A549 (cell line): ENCODE measurements at regions of chr17 and their contacts with region 1.

Region 1: DNA sequence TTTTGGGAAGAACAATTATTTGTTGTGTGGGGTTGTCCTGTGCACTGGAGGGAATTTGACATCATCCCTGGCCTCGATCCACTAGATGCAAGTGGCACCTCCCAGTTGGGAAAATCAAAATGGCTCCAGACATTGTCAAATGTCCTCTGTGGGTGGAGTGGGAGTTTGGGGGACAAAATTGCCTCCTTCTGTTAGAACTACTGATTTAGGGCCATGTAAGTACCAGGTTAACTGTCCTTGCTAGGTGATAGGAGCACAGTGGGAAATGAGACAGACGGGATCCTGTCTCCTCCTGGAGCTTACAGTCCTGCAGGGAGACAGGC is 56.8 kb downstream of the ARHGAP23 start:
- DNase-seq: no peak
- ATAC-seq: no peak
- H3K4me3 ChIP-seq: no peak overlapping the region
- H3K27ac ChIP-seq: no peak overlapping the region
- H3K4me1 ChIP-seq: no peaks in the 10 kb centered on the region
- CTCF ChIP-seq: no peak
- EP300 ChIP-seq: no peak
- POLR2A ChIP-seq: no peak
- RAD21 ChIP-seq: no peak

Region 2: GRCh38 chr17:38421171-38421841 is 63.8 kb before region 1 on chr17:
- CTCF ChIA-PET with region 1: interaction called, 117 read pairs
- POLR2A ChIA-PET with region 1: no interaction called
- DNase-seq: no peak
- ATAC-seq: no peak
- H3K4me3 ChIP-seq: no peak overlapping the region
- H3K27ac ChIP-seq: no peak overlapping the region
- H3K4me1 ChIP-seq: no peaks in the 10 kb centered on the region
- CTCF ChIP-seq: no peak
- EP300 ChIP-seq: no peak
- POLR2A ChIP-seq: no peak
- RAD21 ChIP-seq: no peak

Region 3: GRCh38 chr17:38428112-38428642 is 56.9 kb before region 1 on chr17 and contains the start of gene ARHGAP23:
- CTCF ChIA-PET with region 1: interaction called, 117 read pairs
- POLR2A ChIA-PET with region 1: no interaction called
- DNase-seq: peak; percentile 57 to 60
- ATAC-seq: peak; percentile 62 to 64
- H3K4me3 ChIP-seq: peak within 1 kb of the TSS; percentile 90
- H3K27ac ChIP-seq: peak within 1 kb of the TSS; percentile 77 to 95
- H3K4me1 ChIP-seq: peaks cover 29% of the 10 kb centered on the region
- CTCF ChIP-seq: no peak
- EP300 ChIP-seq: no peak
- POLR2A ChIP-seq: peak; percentile 40
- RAD21 ChIP-seq: no peak
- polyA plus RNA-seq, gene ARHGAP23: 4.8 and 5.5 TPM in 2 replicates

Region 4: GRCh38 chr17:38459557-38459956 is 25.6 kb before region 1 on chr17:
- CTCF ChIA-PET with region 1: interaction called, 23 read pairs
- POLR2A ChIA-PET with region 1: no interaction called
- DNase-seq: no peak
- ATAC-seq: no peak
- H3K4me3 ChIP-seq: no peak overlapping the region
- H3K27ac ChIP-seq: no peak overlapping the region
- H3K4me1 ChIP-seq: peaks cover 34% of the 10 kb centered on the region
- CTCF ChIP-seq: no peak
- EP300 ChIP-seq: no peak
- POLR2A ChIP-seq: no peak
- RAD21 ChIP-seq: no peak

Region 5: GRCh38 chr17:38509008-38509771 is 24.1 kb after region 1 on chr17:
- CTCF ChIA-PET with region 1: interaction called, 30 read pairs
- POLR2A ChIA-PET with region 1: no interaction called
- DNase-seq: peak; percentile 86 to 97
- ATAC-seq: peak; percentile 67 to 86
- H3K4me3 ChIP-seq: no peak overlapping the region
- H3K27ac ChIP-seq: no peak overlapping the region
- H3K4me1 ChIP-seq: peaks cover 19% of the 10 kb centered on the region
- CTCF ChIP-seq: peak; percentile 66
- EP300 ChIP-seq: no peak
- POLR2A ChIP-seq: no peak
- RAD21 ChIP-seq: peak; percentile 39 to 66; a peak in 4 of 5 replicates